Activated CD4-positive, alpha-beta memory T cell treated with anti-CD3 and anti-CD28 coated beads, Interleukin-2, amount 10 ng/mL, durations not matched to agents 7 days and 5 days (primary cell): ENCODE measurements at regions of chr2 and their contacts with region 1.

Region 1: GRCh38 chr2:165794536-165794928 is 485 bp upstream of the GALNT3 start:
- DNase-seq: peak; percentile 84
- H3K4me3 Mint-ChIP-seq: peak overlapping the region; percentile 93
- H3K27ac Mint-ChIP-seq: peak overlapping the region; percentile 95
- H3K4me1 Mint-ChIP-seq: peaks cover 42% of the 10 kb centered on the region
- H3K27me3 Mint-ChIP-seq: peaks cover 4% of the 10 kb centered on the region

Region 2: DNA sequence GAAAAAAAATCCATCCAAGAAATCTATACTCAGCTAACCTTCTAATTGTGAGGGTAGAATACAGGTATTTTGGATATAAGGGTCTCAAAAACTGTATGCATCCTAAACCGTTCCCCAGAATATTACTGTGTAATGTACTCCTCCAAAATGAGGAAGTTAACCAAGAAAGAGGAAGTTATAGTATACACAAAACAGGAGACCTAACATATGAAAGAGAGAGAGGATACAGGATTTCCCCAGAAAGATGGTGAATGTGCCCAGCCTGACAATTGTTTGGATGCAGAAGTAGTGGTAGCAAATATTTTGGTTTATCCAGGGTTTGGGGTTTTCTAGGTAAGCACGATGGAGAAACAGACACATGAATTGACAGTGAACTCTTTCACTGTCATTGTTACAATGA is 51.1 kb before region 1 on chr2:
- CTCF ChIA-PET with region 1: no interaction called
- POLR2A ChIA-PET with region 1: no interaction called
- DNase-seq: no peak
- H3K4me3 Mint-ChIP-seq: no peak overlapping the region
- H3K27ac Mint-ChIP-seq: no peak overlapping the region
- H3K4me1 Mint-ChIP-seq: peaks cover 3% of the 10 kb centered on the region
- H3K27me3 Mint-ChIP-seq: no peaks in the 10 kb centered on the region

Region 3: GRCh38 chr2:165778653-165779451 is 15.7 kb before region 1 on chr2:
- CTCF ChIA-PET with region 1: interaction called, 11 read pairs
- POLR2A ChIA-PET with region 1: interaction called, 12 read pairs
- DNase-seq: no peak
- H3K4me3 Mint-ChIP-seq: no peak overlapping the region
- H3K27ac Mint-ChIP-seq: no peak overlapping the region
- H3K4me1 Mint-ChIP-seq: peaks cover 23% of the 10 kb centered on the region
- H3K27me3 Mint-ChIP-seq: no peaks in the 10 kb centered on the region

Region 4: GRCh38 chr2:165953655-165954606 is 159.4 kb after region 1 on chr2 and contains the start of gene TTC21B:
- CTCF ChIA-PET with region 1: interaction called, 5 read pairs
- POLR2A ChIA-PET with region 1: interaction called, 15 read pairs
- DNase-seq: peak; percentile 91
- H3K4me3 Mint-ChIP-seq: peak within 1 kb of the TSS; percentile 51
- H3K27ac Mint-ChIP-seq: no peak within 1 kb of the TSS
- H3K4me1 Mint-ChIP-seq: peaks cover 12% of the 10 kb centered on the region
- H3K27me3 Mint-ChIP-seq: no peaks in the 10 kb centered on the region
- total RNA-seq, gene TTC21B: 16.5 to 17.1 TPM